Left ventricle myocardium inferior (tissue), 1 donor: ENCODE measurements at regions of chr13 and their contacts with region 1.

Region 1: GRCh38 chr13:58455094-58455493 is 823.5 kb downstream of the PCDH17 start:
- DNase-seq: no peak
- H3K4me3 ChIP-seq: no peak overlapping the region
- H3K27ac ChIP-seq: no peak overlapping the region
- H3K4me1 ChIP-seq: no peaks in the 10 kb centered on the region
- H3K27me3 ChIP-seq: no peaks in the 10 kb centered on the region
- CTCF ChIP-seq: no peak

Region 2: GRCh38 chr13:57878291-57878690 is 576.8 kb before region 1 on chr13:
- intact Hi-C with region 1: loop called (anchors 5 kb)
- DNase-seq: no peak
- H3K4me3 ChIP-seq: no peak overlapping the region
- H3K27ac ChIP-seq: no peak overlapping the region
- H3K4me1 ChIP-seq: no peaks in the 10 kb centered on the region
- H3K27me3 ChIP-seq: no peaks in the 10 kb centered on the region
- CTCF ChIP-seq: no peak

Region 3: DNA sequence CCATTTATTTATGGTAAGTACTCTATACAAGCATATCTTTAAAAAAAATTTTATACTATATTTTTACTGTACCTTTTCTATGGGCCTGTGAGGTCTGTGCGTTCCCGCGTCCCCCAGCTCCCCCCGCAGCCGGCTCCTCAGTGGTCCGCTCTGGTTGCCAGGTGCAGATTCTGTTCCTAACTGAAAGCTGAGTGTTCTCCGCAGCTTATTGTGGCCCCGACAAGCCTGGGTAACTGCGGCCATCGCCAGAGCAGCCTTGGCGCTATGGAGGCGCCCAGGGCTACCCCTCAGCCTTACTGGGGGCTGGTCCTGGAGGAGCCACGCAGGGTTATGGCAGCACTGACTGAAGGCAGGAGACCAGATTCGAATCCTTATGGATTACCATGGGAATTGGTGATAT is 73.3 kb after region 1 on chr13:
- intact Hi-C with region 1: no loop called
- DNase-seq: no peak
- H3K4me3 ChIP-seq: no peak overlapping the region
- H3K27ac ChIP-seq: no peak overlapping the region
- H3K4me1 ChIP-seq: no peaks in the 10 kb centered on the region
- H3K27me3 ChIP-seq: no peaks in the 10 kb centered on the region
- CTCF ChIP-seq: no peak